ENCODE measurements at regions of chr19 and their contacts with region 1.

Region 1: GRCh38 chr19:29610563-29611271 is 4.6 kb downstream of the POP4 start:
- DNase-seq: peak; percentile 74 to 91 (median 77)
- H3K4me3 ChIP-seq: no peak overlapping the region
- H3K4me3 Mint-ChIP-seq: peak overlapping the region in 4 of 7 donors; percentile 32 to 85 (median 64)
- H3K27ac ChIP-seq: no peak overlapping the region
- H3K27ac Mint-ChIP-seq: peak overlapping the region; percentile 47 to 91 (median 87)
- H3K4me1 ChIP-seq: peaks cover 23% of the 10 kb centered on the region
- H3K4me1 Mint-ChIP-seq: peaks cover 25 to 50% (median 33%) of the 10 kb centered on the region in 3 donors
- H3K27me3 ChIP-seq: no peaks in the 10 kb centered on the region
- H3K27me3 Mint-ChIP-seq: no peaks in the 10 kb centered on the region

Region 2: GRCh38 chr19:29477831-29478577 is 132.7 kb before region 1 on chr19:
- CTCF ChIA-PET with region 1: no interaction called
- POLR2A ChIA-PET with region 1: no interaction called
- DNase-seq: no peak
- H3K4me3 ChIP-seq: no peak overlapping the region
- H3K4me3 Mint-ChIP-seq: no peak overlapping the region
- H3K27ac ChIP-seq: no peak overlapping the region
- H3K27ac Mint-ChIP-seq: no peak overlapping the region
- H3K4me1 ChIP-seq: no peaks in the 10 kb centered on the region
- H3K4me1 Mint-ChIP-seq: no peaks in the 10 kb centered on the region
- H3K27me3 ChIP-seq: no peaks in the 10 kb centered on the region
- H3K27me3 Mint-ChIP-seq: peaks cover 12 to 59% of the 10 kb centered on the region in 2 donors

Region 3: GRCh38 chr19:29587518-29587986 is 23.2 kb before region 1 on chr19:
- CTCF ChIA-PET with region 1: interaction called, 4 read pairs
- POLR2A ChIA-PET with region 1: interaction called, 14 read pairs
- DNase-seq: peak; percentile 19 to 89 (median 49)
- H3K4me3 ChIP-seq: no peak overlapping the region
- H3K4me3 Mint-ChIP-seq: peak overlapping the region in 4 of 7 donors; percentile 8 to 59 (median 16)
- H3K27ac ChIP-seq: peak overlapping the region; percentile 44
- H3K27ac Mint-ChIP-seq: peak overlapping the region; percentile 28 to 92 (median 74)
- H3K4me1 ChIP-seq: peaks cover 9% of the 10 kb centered on the region
- H3K4me1 Mint-ChIP-seq: peaks cover 16 to 33% (median 31%) of the 10 kb centered on the region in 3 donors
- H3K27me3 ChIP-seq: peaks cover 4% of the 10 kb centered on the region
- H3K27me3 Mint-ChIP-seq: peaks cover 6 to 12% of the 10 kb centered on the region in 2 donors

Region 4: DNA sequence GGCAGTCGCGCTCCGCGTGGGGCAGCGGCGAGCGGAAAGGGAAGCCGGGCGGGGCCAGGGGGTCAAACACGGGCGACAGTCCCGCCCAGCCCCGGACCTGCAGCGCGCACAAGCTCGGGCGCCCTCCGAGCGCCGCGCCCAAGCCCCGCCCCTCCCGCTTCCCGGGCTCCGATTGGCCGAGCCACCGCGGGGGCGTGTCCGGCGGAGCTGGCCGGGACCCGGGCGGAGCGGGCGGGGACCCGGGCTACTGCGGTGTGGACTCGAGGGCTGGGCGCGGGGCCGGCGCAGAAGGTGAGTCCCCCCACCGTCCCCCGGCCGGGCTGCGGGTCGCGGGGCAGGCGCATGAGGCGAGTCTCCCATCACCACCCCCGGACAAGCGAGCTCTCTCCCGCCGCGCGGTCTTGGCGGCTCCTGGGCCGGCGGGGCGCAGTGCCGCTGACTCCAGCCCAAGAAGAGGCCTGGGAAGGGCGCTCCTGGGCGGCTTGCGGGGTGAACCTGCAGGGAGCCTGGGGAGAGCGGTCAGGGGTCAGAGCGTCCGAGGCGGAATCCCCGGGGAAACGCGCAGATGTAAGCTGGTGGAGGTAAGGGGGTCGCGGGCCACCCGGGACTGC is 54.6 kb after region 1 on chr19 and contains the start of gene PLEKHF1:
- CTCF ChIA-PET with region 1: interaction called, 127 read pairs
- POLR2A ChIA-PET with region 1: interaction called, 46 read pairs
- DNase-seq: peak; percentile 81 to 85 (median 82)
- H3K4me3 ChIP-seq: peak within 1 kb of the TSS; percentile 91
- H3K4me3 Mint-ChIP-seq: peak within 1 kb of the TSS; percentile 88 to 98 (median 93)
- H3K27ac ChIP-seq: peak within 1 kb of the TSS; percentile 69
- H3K27ac Mint-ChIP-seq: peak within 1 kb of the TSS; percentile 89 to 100 (median 98)
- H3K4me1 ChIP-seq: peaks cover 50% of the 10 kb centered on the region
- H3K4me1 Mint-ChIP-seq: peaks cover 37 to 43% (median 42%) of the 10 kb centered on the region in 3 donors
- H3K27me3 ChIP-seq: no peaks in the 10 kb centered on the region
- H3K27me3 Mint-ChIP-seq: no peaks in the 10 kb centered on the region
- total RNA-seq, gene PLEKHF1: 21.3 to 23.0 TPM

Region 5: DNA sequence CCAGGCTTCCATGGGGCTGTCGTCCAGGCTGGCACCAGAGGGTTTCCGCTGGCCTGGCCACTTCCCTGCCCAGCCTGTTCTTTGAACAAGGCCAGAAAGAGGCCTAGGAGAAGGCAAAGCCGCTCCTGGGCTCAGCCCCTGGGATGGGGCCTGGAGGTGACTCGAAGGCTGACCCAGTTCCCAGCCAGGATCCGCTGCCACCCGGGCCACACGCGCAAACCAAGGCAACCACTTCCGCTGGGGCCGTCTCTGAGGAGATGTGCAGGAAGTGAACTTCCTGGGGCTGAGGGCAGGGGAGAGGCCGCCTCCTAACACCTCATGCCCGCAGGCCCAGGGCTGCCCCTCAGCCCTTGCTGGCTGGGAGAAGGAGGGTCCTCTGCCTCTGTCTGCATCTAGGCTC is 69.7 kb after region 1 on chr19:
- CTCF ChIA-PET with region 1: interaction called, 30 read pairs
- POLR2A ChIA-PET with region 1: interaction called, 4 read pairs
- DNase-seq: peak; percentile 79 to 90 (median 86)
- H3K4me3 ChIP-seq: peak overlapping the region; percentile 50
- H3K4me3 Mint-ChIP-seq: peak overlapping the region; percentile 26 to 83 (median 78)
- H3K27ac ChIP-seq: peak overlapping the region; percentile 25
- H3K27ac Mint-ChIP-seq: peak overlapping the region; percentile 81 to 97 (median 94)
- H3K4me1 ChIP-seq: peaks cover 73% of the 10 kb centered on the region
- H3K4me1 Mint-ChIP-seq: peaks cover 64 to 81% (median 75%) of the 10 kb centered on the region in 3 donors
- H3K27me3 ChIP-seq: no peaks in the 10 kb centered on the region
- H3K27me3 Mint-ChIP-seq: no peaks in the 10 kb centered on the region

Region 6: DNA sequence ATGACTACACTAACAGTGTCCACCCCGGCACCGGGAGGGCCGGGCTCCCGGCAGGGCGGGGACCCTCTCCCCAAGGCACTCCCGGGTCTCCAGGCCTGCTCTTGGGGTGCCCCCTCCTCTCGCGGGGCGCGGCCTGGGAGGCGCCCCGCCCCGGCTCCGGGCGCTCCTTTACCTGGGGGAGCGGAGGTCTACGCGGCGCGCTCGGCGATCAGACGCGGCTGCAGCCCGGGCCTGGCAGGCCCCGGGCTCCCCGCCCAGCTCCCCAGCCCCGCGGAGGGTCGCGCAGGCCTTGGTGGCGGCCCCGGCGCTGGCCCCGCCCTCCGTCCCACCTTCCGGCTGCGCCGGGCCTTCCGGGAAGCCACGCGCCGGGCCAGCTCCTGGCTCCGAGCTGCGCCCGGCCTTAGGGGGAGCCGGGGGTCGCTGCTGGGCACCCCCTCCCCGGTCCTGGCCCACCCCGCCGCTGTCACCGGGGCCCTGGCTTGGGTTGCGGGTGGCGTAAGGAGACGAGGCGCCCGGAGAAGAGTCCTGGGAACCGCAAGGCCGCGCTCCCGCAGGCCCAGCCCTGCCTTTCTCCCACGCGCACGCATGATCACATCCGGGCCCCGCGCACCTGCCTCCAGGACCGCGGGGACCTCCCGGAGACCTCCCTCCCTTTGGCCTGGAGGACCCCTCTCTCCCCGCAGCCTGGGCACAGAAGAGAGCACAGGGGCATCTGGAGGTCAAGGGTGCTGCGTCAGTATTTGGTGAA is 104.4 kb after region 1 on chr19 and contains the start of gene C19orf12:
- CTCF ChIA-PET with region 1: interaction called, 168 read pairs
- POLR2A ChIA-PET with region 1: interaction called, 60 read pairs
- DNase-seq: peak; percentile 43 to 85 (median 68)
- H3K4me3 ChIP-seq: peak within 1 kb of the TSS; percentile 83
- H3K4me3 Mint-ChIP-seq: peak within 1 kb of the TSS; percentile 88 to 95 (median 93)
- H3K27ac ChIP-seq: peak within 1 kb of the TSS; percentile 95
- H3K27ac Mint-ChIP-seq: peak within 1 kb of the TSS; percentile 93 to 100 (median 96)
- H3K4me1 ChIP-seq: peaks cover 54% of the 10 kb centered on the region
- H3K4me1 Mint-ChIP-seq: peaks cover 54 to 61% (median 60%) of the 10 kb centered on the region in 3 donors
- H3K27me3 ChIP-seq: no peaks in the 10 kb centered on the region
- H3K27me3 Mint-ChIP-seq: no peaks in the 10 kb centered on the region
- total RNA-seq, gene C19orf12: 32.3 to 35.3 TPM

Region 7: DNA sequence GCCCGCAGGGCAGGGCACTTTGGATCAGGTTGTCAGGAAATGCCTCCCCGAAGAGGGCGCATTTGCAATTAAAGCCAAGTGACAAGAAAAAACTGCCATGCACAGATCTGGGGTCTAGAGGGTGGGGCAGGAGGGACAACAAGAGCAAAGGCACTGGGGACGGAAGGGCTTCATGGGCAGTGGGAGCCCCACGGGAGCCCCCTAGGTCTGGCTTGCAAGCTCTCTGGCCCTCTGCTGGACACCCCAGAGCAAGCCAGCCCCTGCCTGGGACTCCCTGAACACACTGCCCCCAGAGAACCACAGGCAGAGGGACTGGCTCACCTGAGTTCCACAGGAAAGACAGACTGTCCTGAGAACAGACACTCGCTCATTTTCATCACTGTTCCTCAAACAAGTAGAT is 134.5 kb after region 1 on chr19:
- CTCF ChIA-PET with region 1: no interaction called
- POLR2A ChIA-PET with region 1: no interaction called
- DNase-seq: no peak
- H3K4me3 ChIP-seq: no peak overlapping the region
- H3K4me3 Mint-ChIP-seq: no peak overlapping the region
- H3K27ac ChIP-seq: no peak overlapping the region
- H3K27ac Mint-ChIP-seq: no peak overlapping the region
- H3K4me1 ChIP-seq: no peaks in the 10 kb centered on the region
- H3K4me1 Mint-ChIP-seq: no peaks in the 10 kb centered on the region
- H3K27me3 ChIP-seq: no peaks in the 10 kb centered on the region
- H3K27me3 Mint-ChIP-seq: peaks cover 0 to 15% of the 10 kb centered on the region in 2 donors